SK-N-SH (cell line): ENCODE measurements at regions of chr2 and their contacts with region 1.

Region 1: DNA sequence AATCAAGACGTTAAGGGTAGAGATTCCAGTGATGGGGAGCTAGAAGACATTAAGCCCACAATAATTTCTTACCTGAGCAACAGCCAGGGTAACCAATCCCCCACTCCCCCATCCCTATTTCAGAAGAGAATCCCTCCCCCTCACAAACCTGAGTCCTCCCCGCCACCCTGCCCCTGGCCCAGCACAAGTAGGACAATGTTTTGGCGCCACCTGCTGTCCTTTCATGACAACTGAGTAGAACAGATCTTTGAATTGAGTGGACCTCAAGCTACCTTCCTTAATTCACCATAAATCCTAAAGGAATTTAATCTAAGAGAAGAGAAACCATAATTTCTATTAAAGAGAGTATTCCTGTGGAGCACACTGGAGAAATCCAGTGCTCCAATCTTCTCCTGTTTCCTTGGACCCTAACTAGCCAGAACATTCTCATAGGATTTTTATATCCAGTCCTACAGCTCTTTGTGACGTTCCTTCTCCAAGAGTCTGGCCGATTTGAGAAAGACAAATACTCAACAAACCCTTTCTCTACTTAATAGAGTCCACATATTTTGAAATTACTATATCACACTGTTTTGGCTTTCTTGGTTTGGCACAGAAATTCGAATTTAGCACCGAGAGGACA is 41.1 kb downstream of the NHEJ1 start:
- DNase-seq: peak; percentile 77
- H3K4me3 ChIP-seq: no peak overlapping the region; a peak in 1 of 4 replicates
- H3K27ac ChIP-seq: no peak overlapping the region
- H3K4me1 ChIP-seq: no peaks in the 10 kb centered on the region; a peak in 2 of 4 replicates
- H3K27me3 ChIP-seq: no peaks in the 10 kb centered on the region
- CTCF ChIP-seq: peak; percentile 82
- EP300 ChIP-seq: no peak
- RAD21 ChIP-seq: peak; percentile 86

Region 2: GRCh38 chr2:218979846-218980734 is 139.4 kb before region 1 on chr2:
- CTCF ChIA-PET with region 1: interaction called, 136 read pairs
- POLR2A ChIA-PET with region 1: interaction called, 4 read pairs
- DNase-seq: peak; percentile 88
- H3K4me3 ChIP-seq: peak overlapping the region; percentile 45 to 75
- H3K27ac ChIP-seq: peak overlapping the region in 1 of 2 experiments; percentile 69; a peak in 2 of 4 replicates
- H3K4me1 ChIP-seq: peaks cover 0 to 28% of the 10 kb centered on the region in 2 experiments; a peak in 1 of 4 replicates
- H3K27me3 ChIP-seq: peaks cover 28% of the 10 kb centered on the region
- CTCF ChIP-seq: peak; percentile 98
- EP300 ChIP-seq: no peak
- RAD21 ChIP-seq: peak; percentile 80

Region 3: GRCh38 chr2:219020604-219021365 is 98.7 kb before region 1 on chr2:
- CTCF ChIA-PET with region 1: interaction called, 238 read pairs
- POLR2A ChIA-PET with region 1: no interaction called
- DNase-seq: peak; percentile 57
- H3K4me3 ChIP-seq: no peak overlapping the region
- H3K27ac ChIP-seq: peak overlapping the region in 1 of 2 experiments; percentile 71; a peak in 2 of 4 replicates
- H3K4me1 ChIP-seq: peaks cover 0 to 48% of the 10 kb centered on the region in 2 experiments; a peak in 1 of 4 replicates
- H3K27me3 ChIP-seq: peaks cover 32% of the 10 kb centered on the region
- CTCF ChIP-seq: no peak
- EP300 ChIP-seq: peak in 1 of 2 experiments; percentile 5; a peak in 1 of 4 replicates
- RAD21 ChIP-seq: no peak

Region 4: DNA sequence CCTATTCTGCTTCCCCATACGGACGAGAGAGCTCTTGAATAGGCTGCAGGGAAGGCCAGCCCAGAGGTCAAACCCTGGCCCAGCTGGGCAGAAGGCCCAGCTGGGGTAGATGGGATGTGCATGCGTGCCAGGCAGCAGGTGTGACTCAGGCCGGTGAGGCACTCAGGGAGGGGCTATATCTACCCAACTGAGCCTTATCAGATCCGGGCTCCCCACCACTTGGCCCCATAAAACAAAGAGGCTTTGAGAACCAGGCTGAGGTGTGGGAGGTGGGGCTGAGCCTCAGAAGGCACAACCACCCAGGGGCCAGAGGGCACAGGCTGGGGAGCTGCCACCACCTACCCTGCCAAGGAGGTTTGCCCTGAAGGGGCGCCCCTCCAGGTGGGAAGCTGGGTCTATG is 70.3 kb before region 1 on chr2:
- CTCF ChIA-PET with region 1: interaction called, 15 read pairs
- POLR2A ChIA-PET with region 1: no interaction called
- DNase-seq: no peak
- H3K4me3 ChIP-seq: no peak overlapping the region
- H3K27ac ChIP-seq: no peak overlapping the region
- H3K4me1 ChIP-seq: no peaks in the 10 kb centered on the region
- H3K27me3 ChIP-seq: peaks cover 15% of the 10 kb centered on the region
- CTCF ChIP-seq: no peak
- EP300 ChIP-seq: no peak
- RAD21 ChIP-seq: no peak

Region 5: DNA sequence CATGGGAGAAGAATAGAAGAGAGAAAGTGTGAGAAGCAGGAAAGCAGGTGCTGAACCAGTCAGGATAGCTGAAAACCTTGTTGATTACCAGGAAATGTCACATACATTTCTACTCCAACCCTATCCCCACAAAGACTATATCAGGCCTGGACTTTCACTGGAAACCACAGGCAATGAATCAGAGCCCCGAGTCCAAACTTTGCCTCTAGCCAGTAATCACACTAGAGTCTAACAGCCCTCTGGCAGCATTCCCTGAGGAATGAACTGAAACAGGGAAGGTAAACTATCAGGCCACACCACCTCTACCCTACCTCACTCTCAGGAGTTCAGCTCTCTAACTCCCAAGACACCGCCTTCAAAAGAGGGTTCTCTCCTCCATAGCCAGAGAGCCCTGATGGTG is 40.1 kb before region 1 on chr2:
- CTCF ChIA-PET with region 1: interaction called, 46 read pairs
- POLR2A ChIA-PET with region 1: no interaction called
- DNase-seq: no peak
- H3K4me3 ChIP-seq: no peak overlapping the region
- H3K27ac ChIP-seq: no peak overlapping the region
- H3K4me1 ChIP-seq: no peaks in the 10 kb centered on the region
- H3K27me3 ChIP-seq: no peaks in the 10 kb centered on the region
- CTCF ChIP-seq: no peak
- EP300 ChIP-seq: no peak
- RAD21 ChIP-seq: no peak

Region 6: DNA sequence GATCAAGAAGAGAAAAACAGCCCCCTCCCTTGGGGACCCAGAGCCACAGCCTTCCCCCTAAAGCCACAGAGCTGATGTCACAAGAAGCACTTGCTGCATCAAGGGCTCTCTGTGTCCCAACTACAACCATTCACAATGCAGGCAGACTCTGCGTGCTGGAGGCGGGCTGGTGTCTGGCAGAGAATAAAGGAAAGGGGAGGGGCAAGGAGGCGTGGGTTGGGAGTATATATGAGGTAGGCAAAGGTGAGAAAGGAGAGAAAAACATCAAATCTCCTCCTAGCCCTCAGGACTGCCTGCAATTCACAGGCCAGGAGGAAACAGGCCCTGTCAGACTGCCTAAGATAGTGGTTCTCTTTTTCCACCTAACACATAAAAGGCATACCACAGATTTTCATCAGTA is 10.1 kb before region 1 on chr2:
- CTCF ChIA-PET with region 1: interaction called, 73 read pairs
- POLR2A ChIA-PET with region 1: no interaction called
- DNase-seq: no peak
- H3K4me3 ChIP-seq: no peak overlapping the region
- H3K27ac ChIP-seq: no peak overlapping the region
- H3K4me1 ChIP-seq: no peaks in the 10 kb centered on the region
- H3K27me3 ChIP-seq: no peaks in the 10 kb centered on the region
- CTCF ChIP-seq: no peak
- EP300 ChIP-seq: no peak
- RAD21 ChIP-seq: no peak

Region 7: DNA sequence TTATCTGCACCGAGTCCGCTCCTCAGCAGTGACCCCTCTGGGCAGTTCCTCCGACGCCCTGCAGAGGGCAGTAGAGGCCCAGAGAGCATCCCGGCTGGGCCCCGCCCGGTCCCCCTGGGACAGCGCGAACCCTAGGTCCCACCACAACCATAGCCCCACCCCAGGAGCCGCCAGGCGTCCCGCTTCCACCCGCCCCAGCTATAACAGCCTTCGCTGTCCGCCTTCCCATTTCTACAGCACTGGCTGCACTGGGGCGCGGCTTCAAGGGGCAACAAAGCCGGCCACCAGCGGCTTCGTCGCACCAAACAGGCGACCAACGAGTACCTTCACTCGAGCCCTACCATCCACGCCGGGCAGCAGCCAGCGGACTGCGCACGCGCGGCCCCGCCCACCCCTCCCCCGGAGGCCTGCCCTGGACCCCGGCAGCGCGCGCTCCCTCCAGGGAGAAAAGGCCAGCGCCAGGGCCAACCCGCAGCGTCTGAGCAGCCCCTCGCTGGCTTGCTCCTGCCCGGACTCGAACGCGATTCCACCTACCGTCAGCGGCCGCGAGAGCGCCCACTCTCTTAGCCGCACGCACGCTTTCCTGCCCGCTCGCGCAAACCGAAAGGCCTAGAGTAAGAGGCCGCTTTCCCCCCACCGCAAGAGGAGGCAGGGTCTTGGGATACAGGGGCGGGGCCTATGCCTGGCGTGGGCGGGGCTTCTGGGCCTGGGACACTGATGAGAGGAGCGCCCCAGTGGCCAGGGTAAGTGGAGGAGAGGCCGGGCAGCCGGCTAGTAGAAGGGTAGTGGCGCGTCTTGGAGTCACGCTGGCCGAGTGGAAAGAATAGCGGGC is 40.9 kb after region 1 on chr2 and contains the start of gene NHEJ1:
- CTCF ChIA-PET with region 1: interaction called, 40 read pairs
- POLR2A ChIA-PET with region 1: no interaction called
- DNase-seq: peak; percentile 98
- H3K4me3 ChIP-seq: peak within 1 kb of the TSS; percentile 69 to 75
- H3K27ac ChIP-seq: peak within 1 kb of the TSS; percentile 90 to 99
- H3K4me1 ChIP-seq: peaks cover 0 to 11% of the 10 kb centered on the region in 2 experiments; a peak in 1 of 4 replicates
- H3K27me3 ChIP-seq: no peaks in the 10 kb centered on the region
- CTCF ChIP-seq: peak; percentile 96
- EP300 ChIP-seq: no peak
- RAD21 ChIP-seq: peak; percentile 81
- polyA plus RNA-seq, gene NHEJ1: 16.3 and 21.0 TPM in 2 replicates